ENCODE measurements at regions of chr1 and their contacts with region 1.

Region 1: DNA sequence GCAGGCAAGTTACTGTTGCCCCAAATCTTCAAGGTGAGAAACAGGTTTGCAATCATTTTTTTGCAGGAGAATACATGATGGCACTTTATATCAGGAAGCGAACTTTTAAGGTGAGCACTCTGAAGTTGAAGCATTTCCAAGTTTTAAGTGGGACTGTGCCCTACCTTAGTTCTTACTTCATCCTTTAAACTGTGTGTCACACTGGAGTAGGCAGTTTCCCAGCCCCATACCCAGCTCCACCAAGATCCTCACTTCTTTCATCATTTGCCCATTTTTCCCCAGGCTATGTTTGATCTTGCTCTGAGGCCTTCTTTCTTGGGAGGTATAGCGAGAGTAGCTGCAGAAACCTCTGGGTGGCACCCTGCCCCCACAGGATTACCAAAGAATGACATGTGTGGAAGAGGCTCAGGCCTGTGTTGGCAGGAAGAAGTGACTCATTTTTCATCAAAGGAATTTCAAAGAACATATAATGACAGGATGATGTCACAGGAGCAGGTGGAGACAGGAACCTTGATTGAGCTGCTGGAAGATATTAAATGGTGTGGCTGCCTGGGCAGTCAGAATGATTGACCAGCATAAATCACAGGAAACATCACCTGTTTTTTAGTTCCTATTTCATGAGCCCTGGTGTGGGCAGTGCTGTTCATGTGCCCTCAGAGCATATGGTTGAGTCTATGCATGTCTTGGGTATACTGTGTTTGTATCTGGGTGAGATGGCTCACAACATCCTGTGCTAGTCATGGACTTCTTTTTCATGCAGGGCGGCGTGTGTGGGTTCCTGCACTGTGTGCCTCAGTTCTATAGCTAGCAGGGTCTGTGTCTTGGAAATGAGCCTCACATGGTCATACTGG is 20.8 kb upstream of the MACF1 start:
- DNase-seq: peak; percentile 63 to 90 (median 79)
- ATAC-seq: peak; percentile 89 to 93 (median 90)
- H3K4me3 ChIP-seq: no peak overlapping the region
- H3K4me3 Mint-ChIP-seq: peak overlapping the region in 2 of 3 donors; percentile 2 to 39
- H3K27ac ChIP-seq: peak overlapping the region; percentile 83
- H3K27ac Mint-ChIP-seq: peak overlapping the region; percentile 96
- H3K4me1 ChIP-seq: peaks cover 11 to 19% of the 10 kb centered on the region in 2 experiments
- H3K4me1 Mint-ChIP-seq: peaks cover 33 to 46% (median 46%) of the 10 kb centered on the region in 3 donors
- H3K27me3 ChIP-seq: no peaks in the 10 kb centered on the region
- H3K27me3 Mint-ChIP-seq: no peaks in the 10 kb centered on the region

Region 2: GRCh38 chr1:39258146-39258924 is 74.6 kb after region 1 on chr1:
- CTCF ChIA-PET with region 1: interaction called, 7 to 364 read pairs
- POLR2A ChIA-PET with region 1: interaction called in 1 of 2 experiments, 3 read pairs
- DNase-seq: peak; percentile 8 to 84 (median 52)
- ATAC-seq: peak; percentile 66 to 70 (median 68)
- H3K4me3 ChIP-seq: no peak overlapping the region
- H3K4me3 Mint-ChIP-seq: no peak overlapping the region
- H3K27ac ChIP-seq: peak overlapping the region; percentile 33
- H3K27ac Mint-ChIP-seq: peak overlapping the region in 1 of 2 donors; percentile 80
- H3K4me1 ChIP-seq: peaks cover 9 to 10% of the 10 kb centered on the region in 2 experiments
- H3K4me1 Mint-ChIP-seq: peaks cover 25 to 42% (median 33%) of the 10 kb centered on the region in 3 donors
- H3K27me3 ChIP-seq: no peaks in the 10 kb centered on the region
- H3K27me3 Mint-ChIP-seq: no peaks in the 10 kb centered on the region

Measured in T-cell (primary cell).